Thyroid gland (tissue), 4 donors: ENCODE measurements at regions of chr19 and their contacts with region 1.

Region 1: DNA sequence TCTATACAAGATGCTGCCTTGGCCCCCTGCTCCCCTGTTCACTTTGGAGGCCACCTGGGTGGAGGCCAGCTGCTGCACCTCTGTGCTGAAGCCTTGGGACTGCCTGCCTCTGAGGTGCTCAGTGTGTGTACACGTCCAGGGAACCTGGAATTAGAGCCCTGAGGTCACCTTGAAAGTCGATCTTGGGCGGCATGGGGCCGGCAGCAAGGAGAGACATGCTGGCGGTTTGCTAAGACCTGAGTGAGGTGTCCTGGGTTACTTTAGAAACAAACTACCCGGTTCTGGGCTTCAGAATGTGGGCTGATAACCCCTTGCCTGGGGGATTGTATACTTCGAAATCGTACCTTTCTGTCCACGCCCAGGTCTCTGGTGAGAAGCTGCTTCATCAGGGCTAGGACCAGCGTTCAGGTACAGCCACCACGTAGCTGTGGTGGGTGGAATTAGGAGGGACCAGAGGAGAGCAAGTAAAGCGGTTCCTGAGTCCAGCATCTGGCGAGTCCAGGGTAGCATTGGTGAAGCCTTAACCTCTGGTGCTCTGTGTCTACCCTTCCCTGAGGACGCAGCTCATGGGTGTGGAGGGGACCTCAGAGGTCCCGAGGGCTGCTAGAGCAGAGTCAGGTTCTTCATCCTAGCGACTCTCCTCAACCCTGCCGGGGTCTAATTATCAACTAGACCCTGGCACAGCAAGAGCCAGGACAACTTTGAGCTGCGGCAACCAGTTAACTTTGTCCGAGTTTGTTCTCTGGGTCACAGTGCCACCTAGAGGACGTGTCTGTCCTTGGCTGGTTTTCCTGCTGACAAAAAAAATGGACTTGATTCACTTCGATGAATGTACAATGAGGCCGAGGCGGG is 25.3 kb downstream of the TSSK6 start:
- DNase-seq: peak; percentile 81 to 85
- H3K4me3 ChIP-seq: no peak overlapping the region
- H3K27ac ChIP-seq: peak overlapping the region; percentile 65 to 87 (median 70)
- H3K4me1 ChIP-seq: peaks cover 27 to 33% of the 10 kb centered on the region in 2 donors
- H3K27me3 ChIP-seq: no peaks in the 10 kb centered on the region
- CTCF ChIP-seq: peak; percentile 44 to 91 (median 82)
- POLR2A ChIP-seq: no peak

Region 2: GRCh38 chr19:19366612-19367396 is 123.2 kb before region 1 on chr19:
- intact Hi-C with region 1: loop called (anchors 2 kb)
- DNase-seq: peak; percentile 81
- H3K4me3 ChIP-seq: no peak overlapping the region
- H3K27ac ChIP-seq: no peak overlapping the region
- H3K4me1 ChIP-seq: peaks cover 0 to 7% of the 10 kb centered on the region in 2 donors
- H3K27me3 ChIP-seq: no peaks in the 10 kb centered on the region
- CTCF ChIP-seq: peak; percentile 94 to 97 (median 96)
- POLR2A ChIP-seq: no peak